Activated CD4-positive, alpha-beta T cell treated with anti-CD3 and anti-CD28 coated beads, Interleukin-2, amount 10 ng/mL, durations not matched to agents 24 days and 14 days (primary cell): ENCODE measurements at regions of chr14 and their contacts with region 1.

Region 1: GRCh38 chr14:60561845-60562746 is 53.1 kb downstream of the SIX6 start:
- DNase-seq: peak; percentile 68
- H3K4me3 Mint-ChIP-seq: no peak overlapping the region
- H3K27ac Mint-ChIP-seq: no peak overlapping the region
- H3K4me1 Mint-ChIP-seq: no peaks in the 10 kb centered on the region
- H3K27me3 Mint-ChIP-seq: peaks cover 9% of the 10 kb centered on the region

Region 2: GRCh38 chr14:60195179-60195810 is 366.8 kb before region 1 on chr14:
- intact Hi-C with region 1: loop called (anchors 5 kb)
- DNase-seq: no peak
- H3K4me3 Mint-ChIP-seq: no peak overlapping the region
- H3K27ac Mint-ChIP-seq: no peak overlapping the region
- H3K4me1 Mint-ChIP-seq: peaks cover 6% of the 10 kb centered on the region
- H3K27me3 Mint-ChIP-seq: peaks cover 9% of the 10 kb centered on the region

Region 3: DNA sequence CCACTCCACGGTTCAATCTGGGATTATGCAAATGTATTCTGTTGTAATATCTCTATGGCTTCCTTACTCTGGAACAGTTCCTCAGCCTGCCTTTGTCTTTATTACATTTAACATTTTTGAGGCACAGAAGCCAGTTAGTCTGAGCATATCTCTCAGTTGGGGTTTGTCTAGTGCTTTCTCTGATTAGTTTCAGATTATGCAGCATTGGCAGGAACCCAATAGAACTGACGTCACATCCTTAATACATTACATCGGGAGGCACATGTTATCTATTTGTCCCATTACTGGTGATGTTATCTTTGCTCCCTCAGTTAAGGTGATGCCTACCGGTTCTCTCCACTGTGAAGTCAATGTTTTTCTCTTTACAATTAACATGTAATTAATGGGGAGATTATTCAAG is 250.7 kb before region 1 on chr14:
- intact Hi-C with region 1: no loop called
- DNase-seq: no peak
- H3K4me3 Mint-ChIP-seq: no peak overlapping the region
- H3K27ac Mint-ChIP-seq: no peak overlapping the region
- H3K4me1 Mint-ChIP-seq: no peaks in the 10 kb centered on the region
- H3K27me3 Mint-ChIP-seq: peaks cover 21% of the 10 kb centered on the region

Region 4: GRCh38 chr14:60331201-60332045 is 230.7 kb before region 1 on chr14:
- intact Hi-C with region 1: loop called (anchors 1 kb)
- DNase-seq: peak; percentile 92
- H3K4me3 Mint-ChIP-seq: peak overlapping the region; percentile 97
- H3K27ac Mint-ChIP-seq: peak overlapping the region; percentile 95
- H3K4me1 Mint-ChIP-seq: peaks cover 32% of the 10 kb centered on the region
- H3K27me3 Mint-ChIP-seq: peaks cover 42% of the 10 kb centered on the region

Region 5: DNA sequence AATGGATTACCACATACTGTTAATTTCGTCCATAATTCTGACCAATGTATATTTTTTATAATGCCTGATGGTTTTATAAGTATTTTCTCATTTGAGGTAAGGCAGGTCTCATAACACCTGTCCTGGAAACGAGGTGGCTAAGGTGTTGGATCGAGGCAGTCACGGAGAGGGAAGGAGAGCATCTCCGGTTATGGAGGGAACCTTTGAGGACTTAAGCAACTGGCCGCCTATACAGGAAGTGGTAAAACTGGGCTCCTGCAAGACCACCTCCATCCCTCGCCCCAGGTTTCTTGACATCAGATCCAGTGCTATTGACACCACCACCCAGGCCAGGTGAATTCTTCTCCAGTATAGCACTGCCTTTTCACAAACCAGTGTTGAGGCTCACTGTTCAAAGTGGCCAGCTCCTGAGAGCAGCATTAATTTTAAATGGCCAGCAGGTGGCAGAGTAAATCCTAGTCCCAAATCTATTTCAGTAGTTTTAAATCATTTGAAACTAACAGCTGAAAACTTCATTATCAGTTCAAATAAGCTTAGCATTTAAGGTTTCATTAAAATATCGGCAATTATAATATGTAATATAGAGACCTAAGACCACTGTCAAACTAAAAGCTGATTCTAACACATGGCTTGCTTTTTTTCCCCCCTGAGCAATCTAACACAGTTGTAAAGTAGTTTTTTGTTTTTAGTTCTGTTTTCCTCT is 212.3 kb before region 1 on chr14:
- intact Hi-C with region 1: loop called (anchors 5 kb)
- DNase-seq: peak; percentile 72
- H3K4me3 Mint-ChIP-seq: no peak overlapping the region
- H3K27ac Mint-ChIP-seq: no peak overlapping the region
- H3K4me1 Mint-ChIP-seq: no peaks in the 10 kb centered on the region
- H3K27me3 Mint-ChIP-seq: peaks cover 24% of the 10 kb centered on the region